ENCODE measurements at regions of chr1 and their contacts with region 1.

Region 1: DNA sequence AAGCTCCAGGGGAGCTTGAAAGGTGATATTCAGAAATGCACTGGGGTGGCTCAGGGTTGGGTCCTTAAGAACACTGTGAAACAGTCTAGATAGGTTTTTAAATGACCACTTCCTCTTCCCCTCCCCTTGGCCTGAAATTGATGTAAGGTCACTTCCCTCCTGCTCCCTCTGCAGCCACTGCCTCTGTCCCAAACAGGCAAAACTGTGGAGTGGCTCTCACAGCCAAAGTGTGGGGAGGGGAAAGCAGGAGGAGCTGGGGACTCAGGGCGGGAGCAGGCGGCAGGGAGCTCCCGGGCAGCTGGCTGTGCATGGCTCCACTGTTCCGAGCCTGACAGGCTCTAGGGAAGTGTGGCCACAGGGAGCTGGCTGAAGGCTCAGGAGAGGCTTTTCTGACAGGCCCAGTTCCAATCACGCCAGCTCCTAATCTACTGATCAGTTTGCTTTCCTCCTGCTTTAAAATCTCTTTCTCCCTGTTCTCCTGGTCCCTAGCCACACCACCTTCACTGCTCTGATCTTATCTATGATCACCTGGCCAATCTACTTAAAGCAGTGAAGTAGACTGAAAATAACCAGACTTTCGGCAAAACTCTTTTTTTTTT is 5.1 kb upstream of the CSRP1 start:
- DNase-seq: no peak
- H3K4me3 Mint-ChIP-seq: no peak overlapping the region
- H3K27ac Mint-ChIP-seq: no peak overlapping the region
- H3K4me1 Mint-ChIP-seq: peaks cover 9% of the 10 kb centered on the region
- H3K27me3 Mint-ChIP-seq: no peaks in the 10 kb centered on the region

Region 2: GRCh38 chr1:201436393-201436792 is 75.6 kb before region 1 on chr1:
- CTCF ChIA-PET with region 1: interaction called, 48 read pairs
- POLR2A ChIA-PET with region 1: no interaction called
- intact Hi-C with region 1: loop called (anchors 1 kb)
- DNase-seq: no peak
- H3K4me3 Mint-ChIP-seq: no peak overlapping the region
- H3K27ac Mint-ChIP-seq: no peak overlapping the region
- H3K4me1 Mint-ChIP-seq: peaks cover 5% of the 10 kb centered on the region
- H3K27me3 Mint-ChIP-seq: peaks cover 18% of the 10 kb centered on the region

Region 3: GRCh38 chr1:201456499-201457309 is 55.3 kb before region 1 on chr1:
- CTCF ChIA-PET with region 1: interaction called, 16 read pairs
- POLR2A ChIA-PET with region 1: no interaction called
- intact Hi-C with region 1: loop called (anchors 1 kb)
- DNase-seq: no peak
- H3K4me3 Mint-ChIP-seq: no peak overlapping the region
- H3K27ac Mint-ChIP-seq: no peak overlapping the region
- H3K4me1 Mint-ChIP-seq: peaks cover 10% of the 10 kb centered on the region
- H3K27me3 Mint-ChIP-seq: peaks cover 8% of the 10 kb centered on the region

Region 4: GRCh38 chr1:201481761-201482493 is 30.1 kb before region 1 on chr1:
- CTCF ChIA-PET with region 1: interaction called, 291 read pairs
- POLR2A ChIA-PET with region 1: interaction called, 10 read pairs
- intact Hi-C with region 1: loop called (anchors 1 kb)
- DNase-seq: peak; percentile 87
- H3K4me3 Mint-ChIP-seq: peak overlapping the region; percentile 35
- H3K27ac Mint-ChIP-seq: no peak overlapping the region
- H3K4me1 Mint-ChIP-seq: peaks cover 22% of the 10 kb centered on the region
- H3K27me3 Mint-ChIP-seq: peaks cover 10% of the 10 kb centered on the region

Region 5: DNA sequence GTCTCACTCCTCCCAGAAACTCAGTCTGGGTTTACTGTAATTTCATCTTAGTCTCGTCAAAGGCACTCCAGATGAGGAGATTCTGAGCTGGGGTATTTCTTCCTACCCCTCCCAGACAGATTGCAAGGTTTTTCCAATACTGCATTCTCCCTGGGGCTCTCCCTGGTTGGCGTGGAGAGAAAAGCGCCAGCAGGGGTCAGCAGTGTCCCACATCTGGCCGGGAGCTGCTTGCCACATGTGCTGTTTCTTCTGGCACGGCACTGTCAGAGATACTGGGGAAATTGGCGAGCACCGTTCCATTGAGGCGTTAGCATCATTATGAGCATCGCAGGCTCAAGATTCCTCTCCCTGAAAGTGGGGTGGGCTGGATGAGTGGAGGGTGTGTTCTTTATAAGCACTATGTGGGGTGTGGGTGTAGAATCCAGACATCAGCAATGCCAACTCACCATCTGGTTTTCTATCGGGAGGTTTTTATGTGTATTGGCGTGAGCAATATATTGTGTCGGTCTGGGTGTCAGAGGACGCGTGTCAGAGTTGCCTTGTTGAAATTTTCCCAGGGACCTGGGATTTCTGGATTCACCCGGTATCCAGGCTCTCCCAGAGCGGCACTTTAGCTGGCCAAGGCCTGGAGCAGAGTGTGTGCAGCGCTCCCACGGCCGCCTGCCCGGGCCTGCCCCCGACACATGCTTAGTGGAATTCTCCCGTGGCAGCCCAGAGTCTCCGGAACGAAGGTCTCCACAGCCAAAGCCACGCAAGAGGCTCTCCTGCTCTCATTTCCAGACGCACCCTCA is 18.9 kb after region 1 on chr1:
- CTCF ChIA-PET with region 1: interaction called, 23 read pairs
- POLR2A ChIA-PET with region 1: no interaction called
- intact Hi-C with region 1: no loop called
- DNase-seq: peak; percentile 65
- H3K4me3 Mint-ChIP-seq: no peak overlapping the region
- H3K27ac Mint-ChIP-seq: no peak overlapping the region
- H3K4me1 Mint-ChIP-seq: peaks cover 4% of the 10 kb centered on the region
- H3K27me3 Mint-ChIP-seq: peaks cover 3% of the 10 kb centered on the region

Measured in activated CD4-positive, alpha-beta memory T cell treated with anti-CD3 and anti-CD28 coated beads for 36 hours (primary cell).